GM10248 (cell line): ENCODE measurements at regions of chr6 and their contacts with region 1.

Region 1: DNA sequence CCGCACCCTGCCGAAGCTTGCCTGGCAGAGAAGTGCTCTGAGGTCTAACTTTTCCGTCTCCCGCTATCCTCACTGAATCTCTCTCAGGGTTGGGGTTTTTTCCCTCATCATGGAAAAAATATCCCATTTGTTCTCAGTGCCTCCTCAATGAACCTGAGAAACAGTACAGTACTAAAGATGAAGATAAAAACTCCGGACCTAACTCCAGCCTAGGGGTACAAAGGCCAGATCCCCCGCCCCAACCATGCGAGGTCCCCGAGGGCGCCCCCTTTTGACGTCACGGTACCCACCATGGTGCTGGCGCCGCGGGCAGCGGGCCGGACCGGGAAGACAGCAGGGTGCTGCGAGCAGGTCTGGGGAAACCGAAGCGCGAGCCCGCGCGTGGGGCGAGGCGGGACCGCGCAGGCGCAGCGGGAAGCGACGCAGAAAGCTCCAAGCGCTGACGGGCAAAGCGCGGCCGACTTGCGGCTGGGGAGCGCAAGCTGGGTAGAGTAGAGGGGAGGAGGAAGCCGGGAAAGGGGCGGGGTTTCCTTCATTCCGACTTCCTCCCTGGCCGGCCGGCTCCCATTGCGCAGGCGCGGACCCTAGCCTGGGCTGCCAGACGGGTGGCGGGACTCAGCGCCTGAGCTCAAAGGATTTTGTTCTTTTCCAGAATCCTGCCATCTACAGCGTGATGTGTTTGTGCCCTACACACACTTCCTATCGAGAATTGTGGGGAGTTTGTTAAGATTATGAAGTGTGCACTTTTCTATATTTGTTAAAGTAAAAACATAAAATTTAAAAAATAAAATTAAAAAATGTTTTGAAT is at the start of gene LSM2:
- DNase-seq: peak; percentile 100
- CTCF ChIP-seq: peak; percentile 39

Region 2: GRCh38 chr6:31597006-31597405 is 209.7 kb before region 1 on chr6:
- CTCF ChIA-PET with region 1: no interaction called
- POLR2A ChIA-PET with region 1: no interaction called
- DNase-seq: no peak
- CTCF ChIP-seq: peak; percentile 36

Region 3: GRCh38 chr6:31676322-31676903 is 130.3 kb before region 1 on chr6:
- CTCF ChIA-PET with region 1: no interaction called
- POLR2A ChIA-PET with region 1: no interaction called
- DNase-seq: no peak
- CTCF ChIP-seq: no peak

Region 4: DNA sequence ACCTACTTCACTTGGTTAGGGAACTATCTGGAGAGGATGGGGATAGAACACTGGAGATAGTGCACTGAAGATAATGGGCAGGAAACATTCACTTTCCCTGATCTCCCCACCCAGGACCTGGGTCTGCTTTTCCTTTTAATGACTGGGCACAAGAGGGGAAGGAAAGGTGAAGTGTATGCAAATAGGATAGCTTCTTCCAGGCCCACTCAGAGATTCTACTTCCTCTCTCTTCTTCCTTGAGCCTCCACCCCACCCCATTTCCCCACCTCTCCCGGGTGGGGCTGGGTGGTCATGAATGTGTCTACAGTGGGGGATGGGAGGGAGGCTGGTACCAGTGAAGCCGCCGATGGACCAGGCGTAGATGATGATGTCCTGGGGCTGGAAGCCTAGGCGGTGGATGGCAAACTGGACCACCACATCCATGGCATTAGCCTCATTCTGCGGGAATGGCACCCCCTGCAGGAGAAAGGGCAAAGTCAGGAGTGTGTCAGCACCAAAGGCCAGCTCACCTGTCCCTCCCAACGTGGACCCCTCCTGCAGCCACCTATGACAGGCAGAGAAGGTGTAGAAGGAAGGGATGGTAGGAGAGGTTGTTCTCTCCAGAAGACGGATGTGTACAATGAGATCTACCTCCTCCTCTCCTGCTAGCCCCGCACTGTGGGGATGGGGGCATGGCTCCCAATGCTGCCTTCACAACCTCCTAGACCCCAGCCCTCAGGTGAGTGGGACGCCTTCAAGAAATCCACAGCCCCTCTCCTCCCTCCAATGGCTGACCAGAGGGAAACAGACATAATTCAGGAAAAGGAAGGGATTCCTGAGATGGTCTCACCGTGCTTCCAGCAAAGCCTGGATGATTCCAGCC is 117.2 kb before region 1 on chr6:
- CTCF ChIA-PET with region 1: no interaction called
- POLR2A ChIA-PET with region 1: no interaction called
- DNase-seq: no peak
- CTCF ChIP-seq: no peak

Region 5: DNA sequence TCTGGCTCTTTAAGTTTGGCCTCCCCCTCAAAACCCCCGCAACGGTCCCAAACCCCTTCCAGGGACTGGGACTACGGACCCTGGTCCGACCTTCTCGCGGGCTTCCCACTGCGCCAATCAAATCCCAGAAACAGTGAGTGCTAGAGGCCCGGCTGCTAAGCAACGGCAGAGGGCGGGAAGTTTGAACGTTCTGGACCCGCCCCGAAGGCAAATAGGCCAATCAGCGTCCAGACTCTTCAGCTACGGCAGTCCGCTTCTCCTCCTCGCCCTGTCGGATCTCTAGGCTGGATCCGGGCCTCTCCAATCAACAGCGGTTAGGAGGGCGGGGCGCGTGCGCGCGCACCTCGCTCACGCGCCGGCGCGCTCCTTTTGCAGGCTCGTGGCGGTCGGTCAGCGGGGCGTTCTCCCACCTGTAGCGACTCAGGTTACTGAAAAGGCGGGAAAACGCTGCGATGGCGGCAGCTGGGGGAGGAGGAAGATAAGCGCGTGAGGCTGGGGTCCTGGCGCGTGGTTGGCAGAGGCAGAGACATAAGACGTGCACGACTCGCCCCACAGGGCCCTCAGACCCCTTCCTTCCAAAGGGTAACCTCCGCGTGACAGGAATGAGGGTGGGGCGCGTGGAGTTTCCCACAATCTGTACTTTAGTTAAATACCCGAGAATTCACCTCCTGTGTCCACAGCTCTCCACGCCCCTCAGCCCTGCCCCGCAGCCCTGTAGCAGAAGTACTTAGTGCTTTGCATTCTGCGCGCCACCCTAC is 66.9 kb before region 1 on chr6 and contains the start of gene MSH5:
- CTCF ChIA-PET with region 1: interaction called, 23 read pairs
- POLR2A ChIA-PET with region 1: interaction called, 3 read pairs
- DNase-seq: peak; percentile 97
- CTCF ChIP-seq: no peak

Region 6: GRCh38 chr6:31844507-31844906 is 37.8 kb after region 1 on chr6:
- CTCF ChIA-PET with region 1: no interaction called
- POLR2A ChIA-PET with region 1: no interaction called
- DNase-seq: no peak
- CTCF ChIP-seq: no peak